ENCODE measurements at regions of chr17 and their contacts with region 1.

Region 1: DNA sequence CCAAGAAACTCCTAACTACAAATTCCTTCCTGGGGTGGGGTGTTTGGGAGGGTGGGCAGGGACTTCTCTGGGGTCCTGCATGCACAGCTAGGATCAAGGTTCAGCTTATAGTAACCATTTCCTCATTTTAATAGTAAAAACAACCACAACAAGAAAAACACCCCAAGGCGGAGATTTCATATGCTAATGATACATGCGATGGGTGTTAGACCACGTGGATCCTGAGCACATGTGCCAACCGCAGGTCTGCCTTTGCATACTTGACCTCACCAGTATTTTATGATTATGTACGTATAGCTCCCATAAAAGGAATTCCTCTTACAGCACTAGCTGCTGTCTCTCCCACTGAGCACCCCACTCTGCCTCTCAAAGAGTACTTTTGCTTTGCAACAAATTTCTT is 1.9 kb downstream of the KRTAP4-11 start:
- DNase-seq: no peak
- H3K4me3 Mint-ChIP-seq: no peak overlapping the region
- H3K27ac Mint-ChIP-seq: no peak overlapping the region
- H3K4me1 Mint-ChIP-seq: peaks cover 22% of the 10 kb centered on the region
- H3K27me3 Mint-ChIP-seq: no peaks in the 10 kb centered on the region
- CTCF ChIP-seq: no peak

Region 2: GRCh38 chr17:41428591-41429291 is 312.4 kb after region 1 on chr17:
- CTCF ChIA-PET with region 1: interaction called, 10 read pairs
- intact Hi-C with region 1: no loop called
- DNase-seq: no peak
- H3K4me3 Mint-ChIP-seq: no peak overlapping the region
- H3K27ac Mint-ChIP-seq: no peak overlapping the region
- H3K4me1 Mint-ChIP-seq: peaks cover 8% of the 10 kb centered on the region
- H3K27me3 Mint-ChIP-seq: no peaks in the 10 kb centered on the region
- CTCF ChIP-seq: no peak